Activated B cell treated with CpG ODN at 0.5 μM for 24 hours (primary cell): ENCODE measurements at regions of chr9 and their contacts with region 1.

Region 1: DNA sequence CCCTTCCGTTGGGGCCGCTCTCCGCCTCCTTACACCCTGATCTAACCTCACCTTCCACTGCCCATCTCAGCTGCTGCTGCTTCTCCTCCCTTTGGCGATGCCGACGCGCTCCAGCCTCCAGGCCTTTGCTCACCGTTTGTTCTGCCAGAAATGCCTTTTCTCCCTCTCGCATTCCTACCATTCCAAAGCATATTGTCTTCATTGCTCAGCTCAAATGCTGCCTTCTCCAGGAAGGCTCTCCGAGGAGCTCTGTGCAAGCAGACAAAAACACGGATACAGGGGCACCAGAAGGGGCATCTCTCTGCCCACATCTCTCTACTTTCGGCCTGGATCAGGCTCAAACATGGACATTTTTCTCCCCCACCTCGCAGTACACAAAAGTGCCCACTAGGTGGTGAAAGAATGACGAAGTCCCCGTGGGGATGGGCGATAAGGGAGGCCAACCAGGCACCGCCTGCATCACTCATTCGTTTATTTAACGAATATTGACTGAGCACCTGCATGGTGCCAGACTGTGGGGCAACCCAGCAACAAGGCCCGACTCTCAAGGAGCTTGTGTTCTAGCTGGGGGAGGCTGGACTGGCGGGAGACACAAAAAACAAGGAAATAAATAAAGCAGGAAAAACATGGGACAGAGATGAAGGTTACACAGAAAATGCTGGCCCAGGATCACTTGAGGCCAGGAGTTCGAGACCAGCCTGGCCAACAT is 7.3 kb upstream of the GRHPR start:
- DNase-seq: peak; percentile 55
- ATAC-seq: peak; percentile 77
- H3K4me3 Mint-ChIP-seq: peak overlapping the region; percentile 69
- H3K27ac Mint-ChIP-seq: peak overlapping the region; percentile 85
- H3K4me1 Mint-ChIP-seq: peaks cover 63% of the 10 kb centered on the region
- H3K27me3 Mint-ChIP-seq: no peaks in the 10 kb centered on the region
- CTCF ChIP-seq: peak; percentile 64

Region 2: GRCh38 chr9:36873247-36873875 is 541.8 kb before region 1 on chr9:
- CTCF ChIA-PET with region 1: interaction called, 11 read pairs
- POLR2A ChIA-PET with region 1: no interaction called
- intact Hi-C with region 1: loop called (anchors 5 kb)
- DNase-seq: peak; percentile 52
- ATAC-seq: peak; percentile 77
- H3K4me3 Mint-ChIP-seq: no peak overlapping the region
- H3K27ac Mint-ChIP-seq: peak overlapping the region; percentile 87
- H3K4me1 Mint-ChIP-seq: peaks cover 63% of the 10 kb centered on the region
- H3K27me3 Mint-ChIP-seq: no peaks in the 10 kb centered on the region
- CTCF ChIP-seq: no peak

Region 3: DNA sequence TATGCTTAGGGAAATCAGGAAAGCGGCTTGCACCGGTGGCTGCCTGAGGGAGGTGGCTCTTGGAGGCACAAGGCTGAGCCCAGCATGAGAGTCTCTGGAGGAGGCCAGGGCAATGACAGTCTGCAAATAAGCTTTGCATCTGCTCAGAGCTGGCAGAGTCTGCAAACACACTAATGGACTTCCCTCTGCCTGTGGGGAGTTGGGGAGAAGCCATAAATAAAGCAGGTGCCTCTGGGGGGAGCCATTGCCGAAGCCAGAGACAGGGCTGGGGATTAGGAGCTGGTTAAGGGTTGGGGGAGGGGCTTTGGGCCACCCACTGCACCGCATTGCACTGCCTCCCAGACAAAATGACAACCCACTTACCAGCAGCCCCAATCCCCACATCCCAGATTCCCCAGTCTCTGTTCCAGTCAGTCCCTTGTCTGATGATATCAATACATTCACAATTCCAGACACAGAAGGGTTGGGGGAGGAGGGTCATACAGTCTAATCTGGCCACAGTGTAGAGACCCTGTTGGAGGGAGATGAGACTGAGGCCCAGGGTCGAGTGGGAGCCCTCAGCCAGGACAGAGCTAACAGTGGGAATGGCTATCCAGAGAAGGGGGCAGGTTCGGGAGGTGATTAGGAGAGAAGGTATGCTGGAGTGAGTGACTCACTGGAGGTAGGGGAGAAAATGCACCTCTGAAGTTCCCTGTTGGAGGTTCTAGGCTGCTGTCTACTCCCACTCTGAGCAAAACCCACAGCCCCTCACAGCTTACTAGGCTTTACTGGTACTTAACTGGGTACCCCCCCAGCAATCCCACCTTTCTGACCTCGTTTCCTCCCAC is 434.8 kb before region 1 on chr9:
- CTCF ChIA-PET with region 1: no interaction called
- POLR2A ChIA-PET with region 1: no interaction called
- intact Hi-C with region 1: no loop called
- DNase-seq: no peak
- ATAC-seq: peak; percentile 57
- H3K4me3 Mint-ChIP-seq: no peak overlapping the region
- H3K27ac Mint-ChIP-seq: peak overlapping the region; percentile 59
- H3K4me1 Mint-ChIP-seq: peaks cover 84% of the 10 kb centered on the region
- H3K27me3 Mint-ChIP-seq: no peaks in the 10 kb centered on the region
- CTCF ChIP-seq: no peak

Region 4: DNA sequence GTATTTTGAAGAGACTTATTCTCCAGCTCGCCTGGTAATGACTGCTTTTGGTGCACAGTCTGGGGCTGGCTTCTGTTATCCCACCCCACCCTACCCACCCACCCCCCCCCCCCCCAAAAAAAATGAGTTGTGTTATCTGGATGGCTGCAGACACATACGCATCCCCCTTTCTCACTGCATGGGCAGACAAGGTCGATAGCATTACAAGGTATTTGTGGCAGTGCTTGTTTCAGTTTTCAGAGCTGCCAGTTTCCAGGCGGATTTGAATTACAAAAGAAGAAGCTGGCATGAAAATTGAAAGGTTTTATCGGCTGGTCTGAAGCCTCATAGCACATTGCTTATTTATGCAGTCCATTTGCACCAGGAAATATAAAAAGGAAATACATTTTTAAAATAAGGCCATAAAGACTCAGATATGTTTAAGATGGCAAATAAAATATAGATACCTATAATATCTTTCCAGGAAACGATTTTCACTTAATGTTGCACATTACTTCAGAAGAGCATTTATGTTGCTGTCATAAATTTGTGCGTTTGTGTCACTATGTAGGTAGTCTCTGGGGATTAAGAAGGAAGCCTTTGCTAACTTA is 77.8 kb before region 1 on chr9:
- CTCF ChIA-PET with region 1: interaction called, 9 read pairs
- POLR2A ChIA-PET with region 1: interaction called, 18 read pairs
- intact Hi-C with region 1: no loop called
- DNase-seq: no peak
- ATAC-seq: peak; percentile 50
- H3K4me3 Mint-ChIP-seq: peak overlapping the region; percentile 71
- H3K27ac Mint-ChIP-seq: peak overlapping the region; percentile 94
- H3K4me1 Mint-ChIP-seq: peaks cover 73% of the 10 kb centered on the region
- H3K27me3 Mint-ChIP-seq: no peaks in the 10 kb centered on the region
- CTCF ChIP-seq: no peak

Region 5: DNA sequence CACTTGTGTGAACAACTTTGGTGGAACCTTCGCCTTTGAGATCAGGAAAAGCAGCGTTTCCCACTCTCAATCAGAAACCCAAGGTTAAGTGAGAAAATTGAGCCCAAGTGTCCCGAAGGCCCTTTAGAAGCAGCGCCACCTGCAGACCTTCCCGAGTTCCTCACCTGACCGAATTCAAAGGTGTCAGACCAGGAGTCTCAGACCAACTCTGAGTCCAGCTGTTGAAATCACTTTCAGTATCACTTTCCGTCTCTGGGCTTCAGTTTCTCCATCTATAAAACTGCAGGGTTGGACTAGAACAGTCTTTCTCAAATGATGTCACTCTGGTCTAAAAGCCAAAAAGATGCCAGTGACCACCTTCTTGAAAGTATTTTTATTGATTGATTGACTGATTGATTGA is 24.4 kb before region 1 on chr9:
- CTCF ChIA-PET with region 1: interaction called, 15 read pairs
- POLR2A ChIA-PET with region 1: interaction called, 677 read pairs
- intact Hi-C with region 1: no loop called
- DNase-seq: no peak
- ATAC-seq: peak; percentile 54
- H3K4me3 Mint-ChIP-seq: peak overlapping the region; percentile 4
- H3K27ac Mint-ChIP-seq: peak overlapping the region; percentile 86
- H3K4me1 Mint-ChIP-seq: peaks cover 66% of the 10 kb centered on the region
- H3K27me3 Mint-ChIP-seq: no peaks in the 10 kb centered on the region
- CTCF ChIP-seq: no peak

Region 6: DNA sequence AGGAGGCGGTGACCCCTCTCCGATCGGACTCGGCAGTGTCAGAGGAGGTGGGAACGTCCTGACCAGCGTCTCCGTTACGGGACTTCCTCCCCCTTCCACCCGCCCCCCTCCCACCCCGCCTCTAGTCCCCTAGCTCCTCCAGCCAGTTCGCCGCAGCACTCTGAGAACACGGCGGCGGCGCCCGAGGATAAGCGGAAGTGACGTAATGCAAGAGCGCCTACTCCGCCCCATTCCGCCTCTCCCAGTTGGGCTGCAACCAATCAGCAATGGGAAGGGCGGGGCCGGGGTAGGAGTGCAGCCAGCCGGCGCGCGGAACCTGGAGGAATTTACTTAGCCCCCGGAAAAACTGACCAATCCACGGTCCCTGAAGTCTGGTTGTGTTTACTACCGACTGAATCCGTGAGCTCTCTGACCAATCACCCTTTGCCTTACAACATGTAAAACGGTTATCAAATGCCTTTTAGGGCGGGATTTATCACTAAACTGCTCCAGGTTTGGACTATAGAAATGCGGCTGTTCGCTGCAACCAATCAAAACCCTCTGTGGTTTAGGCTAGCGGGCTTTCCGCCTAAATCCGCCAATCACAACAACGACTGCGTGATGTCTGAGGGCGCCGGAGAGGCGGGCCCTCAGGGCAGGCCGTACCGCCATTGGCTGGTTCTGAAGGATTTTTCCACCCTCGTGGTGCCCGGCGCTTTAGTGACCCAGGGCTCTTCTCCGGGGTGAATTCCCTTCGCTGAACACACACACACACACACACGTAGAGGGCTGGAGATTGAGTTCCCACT is 50.3 kb after region 1 on chr9 and contains the start of gene ZBTB5:
- CTCF ChIA-PET with region 1: no interaction called
- POLR2A ChIA-PET with region 1: interaction called, 11 read pairs
- intact Hi-C with region 1: no loop called
- DNase-seq: peak; percentile 93
- ATAC-seq: peak; percentile 76
- H3K4me3 Mint-ChIP-seq: peak within 1 kb of the TSS; percentile 98
- H3K27ac Mint-ChIP-seq: peak within 1 kb of the TSS; percentile 98
- H3K4me1 Mint-ChIP-seq: peaks cover 36% of the 10 kb centered on the region
- H3K27me3 Mint-ChIP-seq: no peaks in the 10 kb centered on the region
- CTCF ChIP-seq: no peak
- total RNA-seq, gene ZBTB5: 26.5 and 28.1 TPM in 2 replicates

Region 7: GRCh38 chr9:37820142-37820541 is 405.0 kb after region 1 on chr9:
- CTCF ChIA-PET with region 1: no interaction called
- POLR2A ChIA-PET with region 1: no interaction called
- intact Hi-C with region 1: no loop called
- DNase-seq: no peak
- ATAC-seq: no peak
- H3K4me3 Mint-ChIP-seq: no peak overlapping the region
- H3K27ac Mint-ChIP-seq: no peak overlapping the region
- H3K4me1 Mint-ChIP-seq: no peaks in the 10 kb centered on the region
- H3K27me3 Mint-ChIP-seq: no peaks in the 10 kb centered on the region
- CTCF ChIP-seq: no peak